ENCODE measurements at regions of chr15 and their contacts with region 1.

Region 1: DNA sequence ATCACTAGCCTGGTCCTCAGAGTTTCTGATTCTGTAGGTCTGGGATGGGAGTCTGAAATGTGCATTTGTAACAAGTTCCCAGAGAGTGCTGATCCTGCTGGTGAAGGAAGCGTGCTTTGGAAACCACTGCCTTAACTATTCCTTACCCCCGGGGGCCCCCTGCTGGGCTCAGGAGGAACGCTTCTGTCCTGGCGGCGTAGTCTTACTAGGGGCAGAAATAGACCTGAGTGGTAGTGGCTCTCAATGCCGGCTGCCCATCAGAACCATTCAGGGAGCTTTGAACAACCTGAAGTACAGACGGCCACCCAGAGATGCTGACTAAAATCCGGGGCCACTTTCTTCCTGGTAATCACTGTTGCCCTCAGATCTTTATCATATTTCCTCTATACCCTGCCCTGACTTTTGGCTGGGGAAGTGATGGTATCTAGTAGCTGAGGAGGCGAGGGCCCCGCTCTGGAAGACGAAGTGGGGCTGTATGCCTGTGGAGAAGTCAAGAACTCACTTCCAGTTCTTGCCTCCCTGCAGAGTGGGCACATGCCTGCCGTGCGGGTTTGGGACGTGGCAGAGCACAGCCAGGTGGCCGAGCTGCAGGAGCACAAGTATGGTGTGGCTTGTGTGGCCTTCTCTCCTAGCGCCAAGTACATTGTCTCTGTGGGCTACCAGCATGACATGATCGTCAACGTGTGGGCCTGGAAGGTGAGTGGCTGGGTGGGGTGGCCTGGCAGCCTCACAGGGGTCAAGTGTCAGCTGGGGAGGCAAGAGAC is 16.3 kb upstream of the JMJD7 start:
- DNase-seq: peak; percentile 53 to 82 (median 77)
- ATAC-seq: peak; percentile 98
- H3K4me3 ChIP-seq: no peak overlapping the region
- H3K4me3 Mint-ChIP-seq: no peak overlapping the region
- H3K27ac ChIP-seq: no peak overlapping the region
- H3K27ac Mint-ChIP-seq: peak overlapping the region; percentile 14
- H3K4me1 ChIP-seq: peaks cover 17% of the 10 kb centered on the region
- H3K4me1 Mint-ChIP-seq: peaks cover 16% of the 10 kb centered on the region
- H3K27me3 ChIP-seq: no peaks in the 10 kb centered on the region
- H3K27me3 Mint-ChIP-seq: no peaks in the 10 kb centered on the region
- CTCF ChIP-seq: peak; percentile 86

Region 2: DNA sequence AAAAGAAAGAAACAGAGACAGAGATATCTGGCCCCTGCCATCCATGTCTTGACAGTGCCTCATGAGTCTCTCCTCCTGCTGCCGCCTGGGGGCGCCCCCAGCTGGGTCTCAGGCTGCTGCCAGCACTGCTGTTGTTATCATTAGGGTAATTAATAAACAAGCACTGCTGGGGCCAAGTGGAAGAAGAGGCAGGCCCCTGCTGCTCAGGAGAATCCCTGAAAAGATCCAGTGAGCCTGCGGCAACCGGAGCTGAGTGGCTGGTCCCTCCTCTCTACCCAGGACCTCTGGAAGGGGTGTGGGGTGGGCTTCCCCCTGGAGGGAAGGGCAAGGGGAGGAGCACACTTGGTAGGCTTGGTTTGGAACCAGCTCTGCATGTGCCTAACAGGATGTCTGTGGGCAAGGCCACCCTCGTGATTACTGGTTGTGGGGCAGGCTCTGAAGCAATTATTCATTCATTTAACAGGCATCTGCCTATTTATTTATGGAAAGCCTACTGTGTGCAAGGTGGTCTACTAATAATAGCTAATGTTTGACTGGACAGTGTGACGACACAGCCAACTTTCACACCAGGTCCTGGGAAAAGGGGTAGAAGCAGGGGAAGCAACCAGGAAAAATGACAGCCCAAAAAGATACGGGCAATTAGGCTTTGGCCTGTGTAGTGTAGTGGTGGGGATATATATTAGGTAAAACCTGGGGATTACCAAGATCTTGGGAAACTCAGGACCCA is 253.8 kb before region 1 on chr15:
- CTCF ChIA-PET with region 1: interaction called, 5 read pairs
- POLR2A ChIA-PET with region 1: interaction called, 3 read pairs
- intact Hi-C with region 1: loop called (anchors 1 to 5 kb)
- DNase-seq: peak; percentile 47 to 90 (median 77)
- ATAC-seq: peak; percentile 88
- H3K4me3 ChIP-seq: peak overlapping the region; percentile 4 to 41
- H3K4me3 Mint-ChIP-seq: peak overlapping the region; percentile 86
- H3K27ac ChIP-seq: peak overlapping the region in 1 of 2 experiments; percentile 69
- H3K27ac Mint-ChIP-seq: peak overlapping the region; percentile 84
- H3K4me1 ChIP-seq: peaks cover 19% of the 10 kb centered on the region
- H3K4me1 Mint-ChIP-seq: peaks cover 14% of the 10 kb centered on the region
- H3K27me3 ChIP-seq: peaks cover 6 to 10% of the 10 kb centered on the region in 2 experiments
- H3K27me3 Mint-ChIP-seq: peaks cover 18% of the 10 kb centered on the region
- CTCF ChIP-seq: peak; percentile 88

Region 3: DNA sequence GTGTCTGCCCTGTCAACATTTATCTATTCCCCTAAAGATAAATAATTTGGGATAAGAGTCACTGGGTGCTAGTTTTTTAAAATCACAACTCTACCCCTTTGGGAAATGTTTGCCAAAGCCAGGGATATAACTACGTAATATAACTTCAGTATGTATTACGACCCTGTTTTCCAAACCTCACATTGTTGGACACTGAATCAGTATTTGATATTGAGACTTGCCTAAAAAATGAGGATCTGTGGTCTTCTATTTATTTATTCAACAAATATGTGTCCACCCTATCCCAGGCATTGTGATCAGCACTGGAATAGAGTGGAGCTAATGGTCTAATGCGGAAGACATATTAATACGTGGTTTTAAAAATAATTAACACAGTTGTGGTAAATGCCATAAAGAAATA is 155.9 kb before region 1 on chr15:
- CTCF ChIA-PET with region 1: no interaction called
- POLR2A ChIA-PET with region 1: no interaction called
- intact Hi-C with region 1: no loop called
- DNase-seq: no peak
- ATAC-seq: no peak
- H3K4me3 ChIP-seq: no peak overlapping the region
- H3K4me3 Mint-ChIP-seq: no peak overlapping the region
- H3K27ac ChIP-seq: no peak overlapping the region
- H3K27ac Mint-ChIP-seq: no peak overlapping the region
- H3K4me1 ChIP-seq: peaks cover 11% of the 10 kb centered on the region
- H3K4me1 Mint-ChIP-seq: peaks cover 13% of the 10 kb centered on the region
- H3K27me3 ChIP-seq: peaks cover 0 to 3% of the 10 kb centered on the region in 2 experiments
- H3K27me3 Mint-ChIP-seq: no peaks in the 10 kb centered on the region
- CTCF ChIP-seq: no peak

Region 4: DNA sequence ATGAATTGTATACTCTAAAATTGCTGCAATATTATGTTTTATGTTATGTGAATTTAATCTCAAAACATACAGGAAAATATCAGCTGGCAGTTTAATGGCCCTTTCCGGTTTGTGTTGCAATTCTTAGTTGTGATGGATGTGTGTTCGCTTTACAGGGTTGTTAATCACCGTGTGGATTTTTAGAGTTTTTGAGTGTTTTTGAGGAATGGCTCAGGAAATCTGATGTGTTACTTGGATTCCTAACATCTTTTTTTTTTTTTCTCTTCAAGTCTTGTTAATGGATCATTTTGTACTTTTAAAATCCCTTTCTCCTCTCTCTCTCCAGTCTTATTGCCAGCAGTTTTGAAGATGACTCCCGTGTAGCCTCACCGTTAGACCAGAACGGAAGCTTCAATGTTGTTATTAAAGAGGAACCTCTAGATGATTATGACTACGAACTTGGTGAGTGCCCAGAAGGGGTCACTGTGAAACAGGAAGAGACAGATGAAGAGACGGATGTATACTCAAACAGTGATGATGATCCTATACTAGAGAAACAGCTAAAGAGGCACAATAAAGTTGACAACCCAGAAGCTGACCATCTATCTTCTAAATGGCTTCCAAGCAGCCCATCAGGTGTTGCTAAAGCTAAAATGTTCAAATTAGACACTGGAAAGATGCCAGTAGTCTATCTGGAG is 115.7 kb before region 1 on chr15:
- CTCF ChIA-PET with region 1: interaction called, 8 read pairs
- POLR2A ChIA-PET with region 1: no interaction called
- intact Hi-C with region 1: loop called (anchors 1 to 2 kb)
- DNase-seq: peak; percentile 7 to 78 (median 41)
- ATAC-seq: peak; percentile 96
- H3K4me3 ChIP-seq: no peak overlapping the region
- H3K4me3 Mint-ChIP-seq: peak overlapping the region; percentile 29
- H3K27ac ChIP-seq: peak overlapping the region in 1 of 2 experiments; percentile 44
- H3K27ac Mint-ChIP-seq: peak overlapping the region; percentile 69
- H3K4me1 ChIP-seq: peaks cover 22% of the 10 kb centered on the region
- H3K4me1 Mint-ChIP-seq: peaks cover 54% of the 10 kb centered on the region
- H3K27me3 ChIP-seq: no peaks in the 10 kb centered on the region
- H3K27me3 Mint-ChIP-seq: no peaks in the 10 kb centered on the region
- CTCF ChIP-seq: peak; percentile 41

Region 5: GRCh38 chr15:41790756-41791546 is 20.7 kb before region 1 on chr15:
- CTCF ChIA-PET with region 1: interaction called, 13 read pairs
- POLR2A ChIA-PET with region 1: no interaction called
- intact Hi-C with region 1: no loop called
- DNase-seq: no peak
- ATAC-seq: no peak
- H3K4me3 ChIP-seq: no peak overlapping the region
- H3K4me3 Mint-ChIP-seq: no peak overlapping the region
- H3K27ac ChIP-seq: peak overlapping the region in 1 of 2 experiments; percentile 10
- H3K27ac Mint-ChIP-seq: no peak overlapping the region
- H3K4me1 ChIP-seq: peaks cover 32% of the 10 kb centered on the region
- H3K4me1 Mint-ChIP-seq: peaks cover 48% of the 10 kb centered on the region
- H3K27me3 ChIP-seq: no peaks in the 10 kb centered on the region
- H3K27me3 Mint-ChIP-seq: no peaks in the 10 kb centered on the region
- CTCF ChIP-seq: no peak

Region 6: GRCh38 chr15:41936649-41937567 is 125.3 kb after region 1 on chr15:
- CTCF ChIA-PET with region 1: interaction called, 12 read pairs
- POLR2A ChIA-PET with region 1: no interaction called
- intact Hi-C with region 1: no loop called
- DNase-seq: peak; percentile 52 to 94 (median 74)
- ATAC-seq: peak; percentile 80
- H3K4me3 ChIP-seq: peak overlapping the region; percentile 9 to 27
- H3K4me3 Mint-ChIP-seq: peak overlapping the region; percentile 75
- H3K27ac ChIP-seq: peak overlapping the region; percentile 86 to 97
- H3K27ac Mint-ChIP-seq: peak overlapping the region; percentile 96
- H3K4me1 ChIP-seq: peaks cover 55% of the 10 kb centered on the region
- H3K4me1 Mint-ChIP-seq: peaks cover 58% of the 10 kb centered on the region
- H3K27me3 ChIP-seq: no peaks in the 10 kb centered on the region
- H3K27me3 Mint-ChIP-seq: no peaks in the 10 kb centered on the region
- CTCF ChIP-seq: peak; percentile 39

Measured in CD8-positive, alpha-beta T cell (primary cell).